Natural killer cell (primary cell): ENCODE measurements at regions of chr20 and their contacts with region 1.

Region 1: GRCh38 chr20:62972270-62973032 is 19.9 kb downstream of the SLC17A9 start:
- DNase-seq: peak; percentile 81 to 90
- ATAC-seq: peak; percentile 88 to 99 (median 98)
- H3K4me3 ChIP-seq: no peak overlapping the region
- H3K4me3 Mint-ChIP-seq: peak overlapping the region; percentile 56
- H3K27ac ChIP-seq: no peak overlapping the region
- H3K27ac Mint-ChIP-seq: peak overlapping the region in 1 of 2 donors; percentile 17
- H3K4me1 ChIP-seq: peaks cover 21% of the 10 kb centered on the region
- H3K4me1 Mint-ChIP-seq: peaks cover 10 to 20% of the 10 kb centered on the region in 2 donors
- H3K27me3 ChIP-seq: peaks cover 45% of the 10 kb centered on the region
- H3K27me3 Mint-ChIP-seq: peaks cover 24 to 38% of the 10 kb centered on the region in 2 donors
- CTCF ChIP-seq: peak; percentile 83

Region 2: GRCh38 chr20:62524505-62524911 is 447.9 kb before region 1 on chr20:
- intact Hi-C with region 1: no loop called
- DNase-seq: no peak
- ATAC-seq: no peak
- H3K4me3 ChIP-seq: no peak overlapping the region
- H3K4me3 Mint-ChIP-seq: no peak overlapping the region
- H3K27ac ChIP-seq: no peak overlapping the region
- H3K27ac Mint-ChIP-seq: no peak overlapping the region
- H3K4me1 ChIP-seq: peaks cover 4% of the 10 kb centered on the region
- H3K4me1 Mint-ChIP-seq: no peaks in the 10 kb centered on the region
- H3K27me3 ChIP-seq: no peaks in the 10 kb centered on the region
- H3K27me3 Mint-ChIP-seq: peaks cover 0 to 3% of the 10 kb centered on the region in 2 donors
- CTCF ChIP-seq: no peak

Region 3: DNA sequence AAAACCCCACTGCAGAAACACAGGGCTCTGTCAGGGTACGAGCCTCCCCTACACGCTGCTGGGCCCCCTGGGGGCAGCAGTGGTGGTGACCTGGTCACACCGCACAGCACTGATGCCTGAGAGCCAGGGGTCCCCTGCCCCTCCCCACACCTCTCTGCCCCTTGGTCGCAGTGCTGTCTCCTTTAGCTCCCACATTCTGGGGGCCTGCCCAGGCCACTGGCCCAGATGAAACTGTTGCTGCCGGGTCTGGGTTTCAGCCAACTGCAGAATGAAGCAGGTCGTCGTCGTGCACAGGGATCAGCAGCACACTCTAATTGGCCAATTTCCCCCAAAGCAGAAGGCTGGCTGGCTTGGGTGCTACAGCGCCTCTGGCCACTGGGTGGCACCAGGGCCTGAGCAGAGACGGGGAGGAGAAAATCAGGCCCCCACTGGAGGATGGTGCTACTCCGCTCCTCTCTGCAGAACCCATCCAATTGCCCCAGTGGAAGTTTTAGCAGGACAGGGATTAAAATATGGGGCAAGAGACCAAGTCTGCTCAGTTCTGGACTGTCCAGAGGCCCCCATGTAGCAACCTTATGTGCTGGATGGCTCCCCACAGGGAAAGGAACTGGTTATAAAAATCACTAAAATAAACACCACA is 72.3 kb before region 1 on chr20:
- intact Hi-C with region 1: loop called (anchors 2 kb)
- DNase-seq: peak; percentile 69 to 88
- ATAC-seq: peak; percentile 92 to 98 (median 96)
- H3K4me3 ChIP-seq: no peak overlapping the region
- H3K4me3 Mint-ChIP-seq: peak overlapping the region; percentile 31
- H3K27ac ChIP-seq: peak overlapping the region; percentile 12
- H3K27ac Mint-ChIP-seq: peak overlapping the region; percentile 57 to 77
- H3K4me1 ChIP-seq: peaks cover 13% of the 10 kb centered on the region
- H3K4me1 Mint-ChIP-seq: peaks cover 26 to 29% of the 10 kb centered on the region in 2 donors
- H3K27me3 ChIP-seq: no peaks in the 10 kb centered on the region
- H3K27me3 Mint-ChIP-seq: no peaks in the 10 kb centered on the region
- CTCF ChIP-seq: peak; percentile 96

Region 4: DNA sequence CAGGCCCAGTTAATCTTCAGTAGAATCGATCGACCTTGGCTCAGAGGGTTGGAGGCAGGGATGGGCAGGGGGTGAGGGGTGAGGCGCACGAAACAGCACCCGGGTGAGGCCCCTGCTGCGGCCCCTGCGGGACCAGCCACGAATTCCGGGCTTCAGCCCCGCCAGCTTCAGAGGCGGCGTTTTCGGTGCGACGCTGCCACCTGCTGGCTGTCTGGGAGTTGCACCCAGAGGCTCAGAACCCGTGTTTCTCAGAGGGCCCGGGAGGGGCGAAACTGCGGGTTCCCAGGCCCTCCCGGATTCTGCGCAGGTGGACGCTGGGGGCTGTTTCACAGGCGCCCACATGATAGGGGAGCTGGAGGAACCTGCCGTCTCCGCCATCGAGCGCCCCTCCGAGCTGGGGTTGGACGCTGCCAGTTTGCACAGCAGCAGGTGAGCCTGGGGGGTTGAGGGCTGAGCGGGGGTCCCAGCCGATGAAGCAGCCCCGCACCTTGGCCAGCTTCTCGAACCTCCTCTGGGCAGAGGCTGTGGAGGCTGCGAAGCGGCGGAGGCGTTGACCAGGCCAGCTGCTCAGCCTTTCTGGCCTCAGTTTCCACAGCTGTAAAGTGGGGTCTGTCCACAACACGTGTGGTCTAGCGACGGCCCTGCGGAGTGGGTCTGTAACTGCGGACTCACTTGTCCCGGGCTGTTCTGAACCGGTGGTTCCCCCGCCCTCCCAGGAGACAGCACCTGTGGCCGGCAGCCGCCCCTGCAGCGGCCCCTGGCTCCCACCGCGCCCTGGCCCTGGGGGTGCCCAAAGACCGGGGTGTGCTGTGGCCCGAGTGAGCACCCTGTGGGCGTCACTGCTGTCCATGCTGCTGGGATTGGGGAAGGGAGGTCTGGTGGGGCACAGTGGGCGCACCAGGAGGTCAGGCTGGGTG is 36.9 kb after region 1 on chr20:
- intact Hi-C with region 1: loop called (anchors 1 kb)
- DNase-seq: peak; percentile 83 to 92
- ATAC-seq: peak; percentile 83 to 84 (median 84)
- H3K4me3 ChIP-seq: no peak overlapping the region
- H3K4me3 Mint-ChIP-seq: peak overlapping the region; percentile 60
- H3K27ac ChIP-seq: no peak overlapping the region
- H3K27ac Mint-ChIP-seq: peak overlapping the region in 1 of 2 donors; percentile 24
- H3K4me1 ChIP-seq: peaks cover 48% of the 10 kb centered on the region
- H3K4me1 Mint-ChIP-seq: peaks cover 10 to 29% of the 10 kb centered on the region in 2 donors
- H3K27me3 ChIP-seq: peaks cover 48% of the 10 kb centered on the region
- H3K27me3 Mint-ChIP-seq: peaks cover 45% of the 10 kb centered on the region in 2 donors
- CTCF ChIP-seq: peak; percentile 96